ENCODE measurements at regions of chr3 and their contacts with region 1.

Region 1: DNA sequence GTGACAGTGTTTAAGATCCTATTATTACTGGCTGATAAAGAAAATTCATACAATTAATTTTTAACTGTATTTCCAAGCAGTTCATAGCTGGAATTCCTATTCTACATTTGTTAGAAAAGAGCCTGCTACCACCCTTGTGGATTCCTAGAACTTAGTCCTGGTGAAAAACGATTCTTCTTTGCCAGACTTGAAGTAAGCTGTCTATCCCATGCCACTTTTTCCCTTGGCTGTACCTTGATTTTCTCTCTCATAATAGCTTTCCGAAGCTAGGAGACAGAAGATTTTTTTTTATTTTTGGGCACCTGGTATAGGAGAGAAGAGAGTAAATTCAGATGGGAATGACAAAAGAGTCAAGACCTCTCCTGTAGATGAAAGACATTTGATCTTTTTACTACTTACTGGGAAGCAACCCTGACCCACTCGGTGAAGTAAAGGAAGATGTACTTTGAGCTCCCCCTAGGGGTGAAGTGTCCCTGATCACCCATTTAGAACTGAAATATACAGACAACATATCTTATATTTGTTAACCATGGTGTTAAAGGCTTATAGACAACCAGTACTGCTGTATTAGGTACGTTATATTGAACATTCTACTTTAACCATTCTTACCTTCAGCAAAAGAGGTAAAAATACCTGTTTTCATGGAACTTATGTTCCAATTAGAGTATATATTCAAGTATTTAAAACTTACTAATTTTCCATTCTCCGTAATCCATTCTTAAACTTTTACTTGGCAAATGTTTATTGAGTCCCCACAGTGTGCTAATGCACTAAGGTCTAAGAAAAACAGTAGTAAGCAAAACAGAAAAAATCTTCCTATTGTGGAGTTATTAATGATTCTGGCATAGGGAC is 36.2 kb upstream of the C3orf38 start:
- DNase-seq: peak; percentile 75
- ATAC-seq: peak; percentile 89
- H3K4me3 Mint-ChIP-seq: no peak overlapping the region
- H3K27ac Mint-ChIP-seq: no peak overlapping the region
- H3K4me1 Mint-ChIP-seq: peaks cover 6% of the 10 kb centered on the region
- H3K27me3 Mint-ChIP-seq: no peaks in the 10 kb centered on the region

Region 2: GRCh38 chr3:88003115-88003755 is 110.3 kb before region 1 on chr3:
- CTCF ChIA-PET with region 1: interaction called, 20 read pairs
- POLR2A ChIA-PET with region 1: no interaction called
- DNase-seq: no peak
- ATAC-seq: no peak
- H3K4me3 Mint-ChIP-seq: no peak overlapping the region
- H3K27ac Mint-ChIP-seq: no peak overlapping the region
- H3K4me1 Mint-ChIP-seq: peaks cover 15% of the 10 kb centered on the region
- H3K27me3 Mint-ChIP-seq: peaks cover 10% of the 10 kb centered on the region

Region 3: DNA sequence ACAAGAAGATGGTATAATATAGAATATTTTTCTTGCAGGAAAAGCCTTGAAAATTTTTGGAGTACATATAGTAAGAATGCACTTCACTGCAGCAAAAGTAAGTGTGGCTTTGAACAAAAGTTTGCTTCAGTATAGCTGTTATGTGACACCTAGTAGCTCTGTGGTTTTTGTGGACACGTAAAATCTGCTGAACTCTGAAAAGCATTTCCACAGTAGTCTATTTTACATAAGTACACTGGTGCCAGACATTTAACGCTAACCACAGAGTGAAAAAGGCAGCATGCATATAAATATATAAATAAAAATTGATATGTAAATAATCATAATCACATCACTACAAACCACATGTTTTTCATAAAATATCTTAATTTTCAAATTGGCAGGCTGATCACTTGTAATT is 94.5 kb before region 1 on chr3:
- CTCF ChIA-PET with region 1: interaction called, 11 read pairs
- POLR2A ChIA-PET with region 1: no interaction called
- DNase-seq: peak; percentile 56
- ATAC-seq: peak; percentile 93
- H3K4me3 Mint-ChIP-seq: no peak overlapping the region
- H3K27ac Mint-ChIP-seq: no peak overlapping the region
- H3K4me1 Mint-ChIP-seq: peaks cover 12% of the 10 kb centered on the region
- H3K27me3 Mint-ChIP-seq: peaks cover 10% of the 10 kb centered on the region

Region 4: GRCh38 chr3:88058591-88059368 is 54.8 kb before region 1 on chr3 and contains the starts of genes CGGBP1 and ZNF654:
- CTCF ChIA-PET with region 1: interaction called, 14 read pairs
- POLR2A ChIA-PET with region 1: no interaction called
- DNase-seq: peak; percentile 99
- ATAC-seq: peak; percentile 96
- H3K4me3 Mint-ChIP-seq: peak within 1 kb of the TSS; percentile 92
- H3K27ac Mint-ChIP-seq: peak within 1 kb of the TSS; percentile 96
- H3K4me1 Mint-ChIP-seq: peaks cover 46% of the 10 kb centered on the region
- H3K27me3 Mint-ChIP-seq: no peaks in the 10 kb centered on the region
- total RNA-seq, gene CGGBP1: 85.6 to 87.6 TPM
- total RNA-seq, gene ZNF654: 21.3 to 22.3 TPM

Region 5: DNA sequence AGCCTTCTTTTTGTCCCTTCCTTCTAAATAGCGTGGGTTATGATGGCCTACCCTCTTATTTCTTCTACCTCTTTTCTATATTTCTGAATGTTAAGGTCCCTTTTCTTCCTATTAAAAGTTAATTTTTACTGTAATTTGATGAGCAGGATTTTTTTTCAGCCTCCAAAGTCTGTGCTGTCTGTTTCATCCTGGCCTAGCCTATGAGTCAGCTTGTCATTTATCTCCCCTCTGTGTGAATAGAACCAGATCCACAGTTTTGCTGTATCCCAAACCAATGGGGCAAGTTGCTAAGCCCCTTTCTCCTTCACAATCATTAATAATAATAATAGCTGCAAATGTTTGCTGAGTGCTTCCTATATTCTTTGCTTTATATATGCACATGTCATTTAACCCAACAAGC is 18.2 kb after region 1 on chr3:
- CTCF ChIA-PET with region 1: interaction called, 10 read pairs
- POLR2A ChIA-PET with region 1: no interaction called
- DNase-seq: no peak
- ATAC-seq: no peak
- H3K4me3 Mint-ChIP-seq: no peak overlapping the region
- H3K27ac Mint-ChIP-seq: no peak overlapping the region
- H3K4me1 Mint-ChIP-seq: peaks cover 5% of the 10 kb centered on the region
- H3K27me3 Mint-ChIP-seq: no peaks in the 10 kb centered on the region

Region 6: DNA sequence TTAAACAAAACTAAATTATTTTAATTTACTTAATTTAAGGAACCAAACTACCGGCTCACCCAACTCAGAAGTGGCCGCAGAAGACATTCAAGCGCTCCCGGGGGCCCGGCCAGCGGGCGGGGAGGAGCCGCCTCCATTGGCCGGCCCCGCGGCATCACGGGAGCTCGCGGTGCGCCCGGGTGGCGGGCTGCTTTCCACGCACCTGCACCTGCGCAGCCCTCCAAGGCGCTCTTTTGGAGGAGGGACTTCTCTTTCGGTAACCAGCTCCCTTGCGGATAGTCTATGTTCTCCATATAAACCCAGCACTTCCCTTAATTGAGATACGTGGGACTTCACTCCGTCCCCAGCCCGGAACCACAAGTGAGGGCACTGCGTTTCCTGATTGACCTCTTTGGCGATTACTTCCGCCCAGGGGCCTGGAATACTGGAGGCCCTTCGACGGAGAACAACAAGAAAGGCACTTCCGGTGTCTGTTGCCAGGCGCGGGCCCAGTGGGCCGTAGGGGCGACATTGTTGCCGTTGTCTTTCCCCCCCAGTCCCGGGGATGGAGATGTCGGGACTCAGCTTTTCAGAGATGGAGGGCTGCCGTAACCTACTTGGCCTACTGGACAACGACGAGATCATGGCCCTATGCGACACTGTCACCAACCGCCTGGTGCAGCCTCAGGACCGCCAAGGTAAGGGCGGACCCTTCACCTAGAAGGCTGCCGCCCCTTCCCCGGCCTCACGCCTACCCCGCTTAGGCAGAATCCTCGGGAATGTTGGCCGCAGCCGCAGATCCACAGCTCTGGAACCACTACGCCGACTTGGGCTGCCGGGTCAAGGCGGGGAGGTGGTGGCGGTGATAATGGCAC is 36.2 kb after region 1 on chr3 and contains the start of gene C3orf38:
- CTCF ChIA-PET with region 1: interaction called, 11 read pairs
- POLR2A ChIA-PET with region 1: interaction called, 9 read pairs
- DNase-seq: peak; percentile 87
- ATAC-seq: peak; percentile 95
- H3K4me3 Mint-ChIP-seq: peak within 1 kb of the TSS; percentile 90
- H3K27ac Mint-ChIP-seq: peak within 1 kb of the TSS; percentile 98
- H3K4me1 Mint-ChIP-seq: peaks cover 33% of the 10 kb centered on the region
- H3K27me3 Mint-ChIP-seq: no peaks in the 10 kb centered on the region
- total RNA-seq, gene C3orf38: 28.0 to 28.8 TPM

Measured in activated CD8-positive, alpha-beta T cell treated with anti-CD3 and anti-CD28 coated beads, Interleukin-2, amount 10 ng/mL, durations not matched to agents 7 days and 5 days (primary cell).